ENCODE measurements at regions of chr14 and their contacts with region 1.

Region 1: GRCh38 chr14:82710267-82710841 is 1176.7 kb upstream of the SEL1L start:
- DNase-seq: peak in 3 of 5 donors; percentile 25 to 43 (median 32)
- ATAC-seq: no peak
- H3K4me3 ChIP-seq: no peak overlapping the region
- H3K27ac ChIP-seq: no peak overlapping the region
- H3K4me1 ChIP-seq: peaks cover 0 to 7% (median 0%) of the 10 kb centered on the region in 12 donors
- H3K27me3 ChIP-seq: no peaks in the 10 kb centered on the region
- CTCF ChIP-seq: peak; percentile 48 to 79 (median 68)
- POLR2A ChIP-seq: no peak

Region 2: DNA sequence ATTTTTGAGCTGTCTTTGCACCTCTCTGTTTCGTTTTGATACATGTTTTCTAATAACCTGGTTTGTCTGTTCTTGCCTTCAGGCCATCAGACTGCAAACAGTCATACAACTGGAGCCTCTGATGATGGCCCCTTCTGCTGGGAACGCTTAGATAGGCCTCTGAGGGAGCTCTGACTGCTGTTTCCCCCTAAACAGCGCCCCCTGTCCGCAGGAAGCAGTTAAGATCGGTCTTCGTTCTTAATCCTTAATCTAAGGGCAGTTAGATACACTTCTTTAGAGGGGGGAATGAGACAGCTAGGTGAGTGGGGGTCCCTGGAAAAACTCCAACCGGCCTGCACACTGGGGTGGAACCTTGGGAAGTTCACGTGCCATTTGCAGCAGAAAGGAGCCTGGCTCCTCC is 162.1 kb after region 1 on chr14:
- intact Hi-C with region 1: loop called in 1 of 10 experiments (anchors 10 kb)
- DNase-seq: no peak
- ATAC-seq: no peak
- H3K4me3 ChIP-seq: no peak overlapping the region
- H3K27ac ChIP-seq: no peak overlapping the region
- H3K4me1 ChIP-seq: no peaks in the 10 kb centered on the region
- H3K27me3 ChIP-seq: no peaks in the 10 kb centered on the region
- CTCF ChIP-seq: peak in 3 of 12 donors; percentile 8 to 25 (median 14)
- POLR2A ChIP-seq: no peak

Measured in heart left ventricle (tissue), 16 donors.